Mammary epithelial cell (primary cell): ENCODE measurements at regions of chr18 and their contacts with region 1.

Region 1: DNA sequence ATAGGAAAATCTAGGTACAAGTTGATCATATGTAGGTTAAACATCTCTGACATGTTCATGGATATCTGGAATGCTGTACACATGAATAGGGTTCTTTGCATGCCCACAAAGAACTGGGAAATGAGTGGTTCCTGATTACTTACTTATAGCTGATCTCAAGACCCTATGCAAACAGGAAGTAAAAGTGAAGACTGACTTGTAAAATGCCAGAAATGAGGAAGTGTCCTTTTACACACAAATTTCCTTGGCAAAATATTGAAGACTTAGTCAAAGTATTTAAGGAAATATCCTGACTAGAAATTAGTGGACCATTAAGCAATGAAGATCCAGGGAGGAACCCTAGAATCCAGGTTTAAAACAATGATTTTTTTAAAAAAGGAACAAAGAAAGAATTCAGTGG is 203.7 kb upstream of the DLGAP1 start:
- DNase-seq: no peak
- H3K4me3 ChIP-seq: no peak overlapping the region
- H3K27ac ChIP-seq: no peak overlapping the region
- H3K4me1 ChIP-seq: no peaks in the 10 kb centered on the region
- H3K27me3 ChIP-seq: no peaks in the 10 kb centered on the region
- CTCF ChIP-seq: no peak

Region 2: GRCh38 chr18:4455113-4455811 is 203.5 kb before region 1 on chr18 and contains the start of gene DLGAP1:
- CTCF ChIA-PET with region 1: no interaction called
- dilution Hi-C with region 1: no loop called
- in situ Hi-C with region 1: no loop called
- intact Hi-C with region 1: no loop called
- DNase-seq: peak; percentile 24
- H3K4me3 ChIP-seq: peak within 1 kb of the TSS in 1 of 3 experiments; percentile 24
- H3K27ac ChIP-seq: no peak within 1 kb of the TSS
- H3K4me1 ChIP-seq: no peaks in the 10 kb centered on the region
- H3K27me3 ChIP-seq: peaks cover 21% of the 10 kb centered on the region
- CTCF ChIP-seq: no peak
- total RNA-seq, gene DLGAP1: 1.7 TPM in 1 of 2 donors, not detected in the other

Region 3: GRCh38 chr18:4599312-4599711 is 59.5 kb before region 1 on chr18:
- CTCF ChIA-PET with region 1: no interaction called
- dilution Hi-C with region 1: no loop called
- in situ Hi-C with region 1: no loop called
- intact Hi-C with region 1: no loop called
- DNase-seq: no peak
- H3K4me3 ChIP-seq: no peak overlapping the region
- H3K27ac ChIP-seq: no peak overlapping the region
- H3K4me1 ChIP-seq: no peaks in the 10 kb centered on the region
- H3K27me3 ChIP-seq: no peaks in the 10 kb centered on the region
- CTCF ChIP-seq: no peak

Region 4: GRCh38 chr18:4704781-4705180 is 46.0 kb after region 1 on chr18:
- CTCF ChIA-PET with region 1: no interaction called
- dilution Hi-C with region 1: loop called (anchors 5 kb)
- in situ Hi-C with region 1: no loop called
- intact Hi-C with region 1: no loop called
- DNase-seq: no peak
- H3K4me3 ChIP-seq: no peak overlapping the region
- H3K27ac ChIP-seq: no peak overlapping the region
- H3K4me1 ChIP-seq: no peaks in the 10 kb centered on the region
- H3K27me3 ChIP-seq: no peaks in the 10 kb centered on the region
- CTCF ChIP-seq: no peak

Region 5: DNA sequence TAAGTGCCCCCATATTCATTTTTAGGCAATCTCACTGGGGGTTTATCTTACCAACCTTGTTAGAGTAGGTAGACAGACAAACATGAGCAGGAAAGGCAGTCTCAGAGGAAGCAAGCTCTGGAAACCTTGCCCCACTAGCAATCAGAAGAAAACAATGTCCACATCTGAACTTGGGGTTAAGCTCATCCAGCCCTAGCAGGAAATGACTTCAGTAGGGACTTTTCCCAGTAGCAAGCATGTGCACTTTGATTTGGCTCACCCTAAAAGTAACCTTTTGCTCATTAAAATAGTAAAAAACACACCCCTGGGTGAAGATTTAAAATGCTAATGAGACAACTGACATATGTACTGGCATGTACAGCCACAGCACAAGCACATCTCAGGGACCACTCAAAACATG is 362.8 kb after region 1 on chr18:
- CTCF ChIA-PET with region 1: no interaction called
- dilution Hi-C with region 1: no loop called
- in situ Hi-C with region 1: no loop called
- intact Hi-C with region 1: no loop called
- DNase-seq: no peak
- H3K4me3 ChIP-seq: no peak overlapping the region
- H3K27ac ChIP-seq: no peak overlapping the region
- H3K4me1 ChIP-seq: no peaks in the 10 kb centered on the region
- H3K27me3 ChIP-seq: no peaks in the 10 kb centered on the region
- CTCF ChIP-seq: no peak